Colonic mucosa (tissue), 4 donors: ENCODE measurements at regions of chr7 and their contacts with region 1.

Region 1: GRCh38 chr7:77759294-77759889 is 38.8 kb downstream of the TMEM60 start:
- DNase-seq: peak; percentile 85
- H3K4me3 ChIP-seq: no peak overlapping the region
- H3K27ac ChIP-seq: no peak overlapping the region
- H3K4me1 ChIP-seq: no peaks in the 10 kb centered on the region
- H3K27me3 ChIP-seq: no peaks in the 10 kb centered on the region
- CTCF ChIP-seq: peak; percentile 72

Region 2: GRCh38 chr7:77439572-77439971 is 319.8 kb before region 1 on chr7:
- intact Hi-C with region 1: no loop called
- DNase-seq: peak; percentile 59
- H3K4me3 ChIP-seq: no peak overlapping the region
- H3K27ac ChIP-seq: no peak overlapping the region
- H3K4me1 ChIP-seq: no peaks in the 10 kb centered on the region
- H3K27me3 ChIP-seq: no peaks in the 10 kb centered on the region
- CTCF ChIP-seq: peak; percentile 25

Region 3: GRCh38 chr7:77657427-77658224 is 101.8 kb before region 1 on chr7:
- intact Hi-C with region 1: loop called (anchors 2 kb)
- DNase-seq: peak; percentile 52
- H3K4me3 ChIP-seq: no peak overlapping the region
- H3K27ac ChIP-seq: no peak overlapping the region
- H3K4me1 ChIP-seq: no peaks in the 10 kb centered on the region
- H3K27me3 ChIP-seq: no peaks in the 10 kb centered on the region
- CTCF ChIP-seq: peak; percentile 55

Region 4: DNA sequence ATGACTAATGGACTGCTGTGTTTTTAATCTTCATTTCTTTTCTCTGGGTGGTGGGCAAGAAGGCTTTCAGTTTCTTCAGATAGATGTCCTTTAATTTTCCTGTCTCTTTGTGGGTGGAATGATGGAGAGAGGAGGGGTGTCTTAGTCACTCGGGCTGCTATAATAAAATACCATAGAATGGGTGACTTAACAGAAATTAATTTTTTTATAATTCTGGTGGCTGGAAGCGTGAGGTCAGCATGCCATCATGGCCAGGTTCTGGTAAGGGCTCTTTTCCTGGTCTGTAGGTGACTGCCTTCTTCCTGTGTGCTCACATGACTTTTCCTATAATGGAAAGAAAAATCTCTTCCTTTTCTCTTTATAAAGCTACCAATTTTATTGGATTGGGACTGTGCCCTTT is 56.9 kb before region 1 on chr7:
- intact Hi-C with region 1: loop called (anchors 10 kb)
- DNase-seq: no peak
- H3K4me3 ChIP-seq: no peak overlapping the region
- H3K27ac ChIP-seq: no peak overlapping the region
- H3K4me1 ChIP-seq: peaks cover 3% of the 10 kb centered on the region
- H3K27me3 ChIP-seq: no peaks in the 10 kb centered on the region
- CTCF ChIP-seq: no peak